ENCODE measurements at regions of chr2 and their contacts with region 1.

Region 1: GRCh38 chr2:3303583-3304406 is 73.8 kb downstream of the EIPR1 start:
- DNase-seq: peak; percentile 89
- ATAC-seq: peak; percentile 97 to 98

Region 2: GRCh38 chr2:3001615-3002560 is 301.9 kb before region 1 on chr2:
- intact Hi-C with region 1: loop called in 1 of 2 experiments (anchors 2 kb)
- DNase-seq: no peak
- ATAC-seq: peak in 1 of 2 donors; percentile 71